CD4-positive, alpha-beta T cell (primary cell): ENCODE measurements at regions of chr1 and their contacts with region 1.

Region 1: GRCh38 chr1:26233903-26234643 is at the start of gene CEP85:
- DNase-seq: peak; percentile 97 to 100 (median 99)
- ATAC-seq: peak; percentile 89
- H3K4me3 ChIP-seq: peak within 1 kb of the TSS; percentile 77
- H3K4me3 Mint-ChIP-seq: peak within 1 kb of the TSS; percentile 98
- H3K27ac ChIP-seq: peak within 1 kb of the TSS; percentile 83 to 88
- H3K27ac Mint-ChIP-seq: peak within 1 kb of the TSS; percentile 95
- H3K4me1 ChIP-seq: peaks cover 21% of the 10 kb centered on the region
- H3K4me1 Mint-ChIP-seq: peaks cover 39% of the 10 kb centered on the region
- H3K27me3 ChIP-seq: no peaks in the 10 kb centered on the region
- H3K27me3 Mint-ChIP-seq: no peaks in the 10 kb centered on the region
- CTCF ChIP-seq: peak; percentile 85
- total RNA-seq, gene CEP85: 7.6 to 8.4 TPM

Region 2: GRCh38 chr1:26035959-26036755 is 197.9 kb before region 1 on chr1:
- CTCF ChIA-PET with region 1: interaction called, 10 read pairs
- POLR2A ChIA-PET with region 1: interaction called, 3 read pairs
- intact Hi-C with region 1: no loop called
- DNase-seq: peak; percentile 57 to 88 (median 72)
- ATAC-seq: peak; percentile 65
- H3K4me3 ChIP-seq: peak overlapping the region; percentile 99
- H3K4me3 Mint-ChIP-seq: peak overlapping the region; percentile 94
- H3K27ac ChIP-seq: peak overlapping the region; percentile 60 to 75
- H3K27ac Mint-ChIP-seq: peak overlapping the region; percentile 88
- H3K4me1 ChIP-seq: peaks cover 22% of the 10 kb centered on the region
- H3K4me1 Mint-ChIP-seq: peaks cover 17% of the 10 kb centered on the region
- H3K27me3 ChIP-seq: peaks cover 0 to 2% of the 10 kb centered on the region in 2 experiments
- H3K27me3 Mint-ChIP-seq: no peaks in the 10 kb centered on the region
- CTCF ChIP-seq: peak; percentile 100

Region 3: DNA sequence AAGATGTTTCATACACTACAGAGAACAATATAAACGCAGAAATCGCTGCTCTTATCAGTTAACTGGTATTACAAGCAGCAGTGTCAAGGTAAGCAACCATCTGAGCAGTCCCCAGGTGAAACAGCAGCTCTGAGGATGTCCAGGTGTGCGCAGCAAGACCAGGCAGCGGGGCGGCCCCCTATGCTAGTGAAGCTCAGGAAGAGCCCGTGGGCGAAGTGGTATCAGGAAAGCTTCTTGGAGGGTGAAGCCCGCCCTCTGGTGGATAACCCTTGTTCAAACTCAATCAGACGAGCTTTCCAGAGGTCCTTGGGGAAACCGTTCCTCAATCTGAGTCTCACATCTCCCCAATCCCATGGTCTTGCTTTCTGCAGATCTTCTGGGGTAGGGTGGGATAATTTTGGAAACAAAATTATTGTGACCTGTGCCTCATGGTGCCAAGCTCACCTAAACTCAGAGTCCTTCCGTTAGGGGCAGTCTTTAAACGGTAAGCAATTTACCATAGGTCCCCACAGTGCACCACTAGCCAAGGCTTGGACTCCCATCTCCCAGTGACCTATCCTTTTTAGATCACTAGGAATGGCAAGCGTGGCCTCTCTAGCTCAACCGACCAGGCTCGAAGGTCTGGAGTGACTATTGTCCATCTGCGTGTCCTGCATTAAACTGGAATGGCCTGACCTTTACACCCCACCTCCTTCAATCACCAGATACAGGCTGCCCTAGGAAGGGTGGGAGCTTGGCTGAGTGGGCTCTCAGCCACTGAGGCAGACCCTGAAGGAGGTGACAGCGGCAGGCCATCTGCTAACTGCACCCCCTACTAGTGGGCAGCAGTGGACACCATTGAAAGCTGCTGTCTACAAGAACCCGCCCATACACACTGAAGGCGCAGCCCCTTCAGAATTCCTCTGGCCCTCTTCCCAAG is 88.8 kb before region 1 on chr1:
- CTCF ChIA-PET with region 1: interaction called, 12 read pairs
- POLR2A ChIA-PET with region 1: interaction called, 9 read pairs
- intact Hi-C with region 1: no loop called
- DNase-seq: peak; percentile 54 to 91 (median 74)
- ATAC-seq: peak; percentile 97
- H3K4me3 ChIP-seq: no peak overlapping the region
- H3K4me3 Mint-ChIP-seq: no peak overlapping the region
- H3K27ac ChIP-seq: no peak overlapping the region
- H3K27ac Mint-ChIP-seq: no peak overlapping the region
- H3K4me1 ChIP-seq: peaks cover 9% of the 10 kb centered on the region
- H3K4me1 Mint-ChIP-seq: peaks cover 6% of the 10 kb centered on the region
- H3K27me3 ChIP-seq: no peaks in the 10 kb centered on the region
- H3K27me3 Mint-ChIP-seq: no peaks in the 10 kb centered on the region
- CTCF ChIP-seq: peak; percentile 86

Region 4: GRCh38 chr1:26190373-26190987 is 43.6 kb before region 1 on chr1 and contains the start of gene CATSPER4:
- CTCF ChIA-PET with region 1: interaction called, 12 read pairs
- POLR2A ChIA-PET with region 1: interaction called, 4 read pairs
- intact Hi-C with region 1: no loop called
- DNase-seq: peak in 4 of 14 experiments; percentile 17 to 40 (median 30)
- ATAC-seq: no peak
- H3K4me3 ChIP-seq: no peak within 1 kb of the TSS
- H3K4me3 Mint-ChIP-seq: no peak within 1 kb of the TSS
- H3K27ac ChIP-seq: no peak within 1 kb of the TSS
- H3K27ac Mint-ChIP-seq: no peak within 1 kb of the TSS
- H3K4me1 ChIP-seq: peaks cover 11% of the 10 kb centered on the region
- H3K4me1 Mint-ChIP-seq: peaks cover 17% of the 10 kb centered on the region
- H3K27me3 ChIP-seq: no peaks in the 10 kb centered on the region
- H3K27me3 Mint-ChIP-seq: no peaks in the 10 kb centered on the region
- CTCF ChIP-seq: no peak
- total RNA-seq, gene CATSPER4: not detected

Region 5: GRCh38 chr1:26220199-26220912 is 13.7 kb before region 1 on chr1:
- CTCF ChIA-PET with region 1: interaction called, 14 read pairs
- POLR2A ChIA-PET with region 1: no interaction called
- intact Hi-C with region 1: no loop called
- DNase-seq: no peak
- ATAC-seq: no peak
- H3K4me3 ChIP-seq: no peak overlapping the region
- H3K4me3 Mint-ChIP-seq: no peak overlapping the region
- H3K27ac ChIP-seq: no peak overlapping the region
- H3K27ac Mint-ChIP-seq: no peak overlapping the region
- H3K4me1 ChIP-seq: peaks cover 5% of the 10 kb centered on the region
- H3K4me1 Mint-ChIP-seq: peaks cover under 1% of the 10 kb centered on the region
- H3K27me3 ChIP-seq: peaks cover 3 to 8% of the 10 kb centered on the region in 2 experiments
- H3K27me3 Mint-ChIP-seq: peaks cover 18% of the 10 kb centered on the region
- CTCF ChIP-seq: no peak

Region 6: GRCh38 chr1:26417111-26417759 is 183.2 kb after region 1 on chr1:
- CTCF ChIA-PET with region 1: interaction called, 10 read pairs
- POLR2A ChIA-PET with region 1: interaction called, 3 read pairs
- intact Hi-C with region 1: no loop called
- DNase-seq: peak; percentile 78 to 91 (median 82)
- ATAC-seq: peak; percentile 100
- H3K4me3 ChIP-seq: no peak overlapping the region
- H3K4me3 Mint-ChIP-seq: no peak overlapping the region
- H3K27ac ChIP-seq: no peak overlapping the region
- H3K27ac Mint-ChIP-seq: no peak overlapping the region
- H3K4me1 ChIP-seq: no peaks in the 10 kb centered on the region
- H3K4me1 Mint-ChIP-seq: no peaks in the 10 kb centered on the region
- H3K27me3 ChIP-seq: peaks cover 19 to 27% of the 10 kb centered on the region in 2 experiments
- H3K27me3 Mint-ChIP-seq: peaks cover 40% of the 10 kb centered on the region
- CTCF ChIP-seq: peak; percentile 95

Region 7: GRCh38 chr1:27321813-27322577 is 1087.9 kb after region 1 on chr1 and contains the start of gene TMEM222:
- CTCF ChIA-PET with region 1: no interaction called
- POLR2A ChIA-PET with region 1: no interaction called
- intact Hi-C with region 1: no loop called
- DNase-seq: peak; percentile 93 to 99 (median 96)
- ATAC-seq: peak; percentile 93
- H3K4me3 ChIP-seq: peak within 1 kb of the TSS; percentile 90
- H3K4me3 Mint-ChIP-seq: peak within 1 kb of the TSS; percentile 99
- H3K27ac ChIP-seq: peak within 1 kb of the TSS; percentile 86 to 90
- H3K27ac Mint-ChIP-seq: peak within 1 kb of the TSS; percentile 88
- H3K4me1 ChIP-seq: peaks cover 48% of the 10 kb centered on the region
- H3K4me1 Mint-ChIP-seq: peaks cover 52% of the 10 kb centered on the region
- H3K27me3 ChIP-seq: no peaks in the 10 kb centered on the region
- H3K27me3 Mint-ChIP-seq: peaks cover 4% of the 10 kb centered on the region
- CTCF ChIP-seq: no peak
- total RNA-seq, gene TMEM222: 21.8 to 22.5 TPM

Region 8: DNA sequence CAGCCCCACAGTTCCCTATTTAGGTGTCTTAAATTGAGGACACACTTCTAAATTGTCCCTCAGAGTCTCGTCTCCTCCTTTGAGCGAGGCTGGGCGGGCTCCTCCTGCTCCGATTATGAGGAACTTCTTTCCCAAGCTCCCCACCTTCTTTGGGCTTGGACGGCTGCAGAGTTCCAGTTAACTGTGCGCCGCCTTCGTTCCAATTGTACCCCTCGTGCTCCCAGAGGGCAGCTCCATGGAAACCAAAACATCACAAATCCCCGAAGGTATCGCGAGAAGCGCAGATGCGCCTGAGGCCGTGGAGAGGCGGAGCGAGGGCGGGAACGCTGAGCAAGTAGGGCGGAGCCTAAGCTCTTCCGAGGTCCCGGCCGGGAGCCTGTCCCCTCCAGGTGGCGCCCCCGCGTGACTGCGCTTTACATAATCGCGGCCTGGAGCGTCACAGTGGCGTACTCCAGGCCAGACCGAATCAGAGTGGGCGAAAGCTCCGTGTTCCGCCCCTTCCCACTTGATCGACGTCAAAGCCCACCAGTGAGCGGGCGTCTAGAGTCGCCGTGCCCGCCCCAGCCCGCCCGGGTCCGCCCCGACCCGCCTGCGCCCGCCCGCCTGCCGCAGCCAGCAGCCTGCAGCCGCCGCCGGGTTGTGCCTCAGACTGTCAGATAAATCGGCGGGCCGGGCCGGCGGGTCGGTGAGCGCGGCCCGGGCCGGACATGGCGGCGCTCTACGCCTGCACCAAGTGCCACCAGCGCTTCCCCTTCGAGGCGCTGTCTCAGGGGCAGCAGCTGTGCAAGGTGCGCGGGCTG is 1491.5 kb after region 1 on chr1 and contains the start of gene FAM76A:
- CTCF ChIA-PET with region 1: no interaction called
- POLR2A ChIA-PET with region 1: no interaction called
- intact Hi-C with region 1: no loop called
- DNase-seq: peak; percentile 99 to 100 (median 99)
- ATAC-seq: peak; percentile 92
- H3K4me3 ChIP-seq: peak within 1 kb of the TSS; percentile 74
- H3K4me3 Mint-ChIP-seq: peak within 1 kb of the TSS; percentile 85
- H3K27ac ChIP-seq: peak within 1 kb of the TSS; percentile 82 to 85
- H3K27ac Mint-ChIP-seq: peak within 1 kb of the TSS; percentile 89
- H3K4me1 ChIP-seq: peaks cover 19% of the 10 kb centered on the region
- H3K4me1 Mint-ChIP-seq: peaks cover 24% of the 10 kb centered on the region
- H3K27me3 ChIP-seq: no peaks in the 10 kb centered on the region
- H3K27me3 Mint-ChIP-seq: no peaks in the 10 kb centered on the region
- CTCF ChIP-seq: peak; percentile 60
- total RNA-seq, gene FAM76A: 26.0 to 28.7 TPM